IMR-90 (cell line): ENCODE measurements at regions of chr10 and their contacts with region 1.

Region 1: GRCh38 chr10:29081951-29082699 is 206.7 kb upstream of the LYZL1 start:
- DNase-seq: no peak
- ATAC-seq: no peak
- H3K4me3 ChIP-seq: no peak overlapping the region
- H3K27ac ChIP-seq: no peak overlapping the region
- H3K4me1 ChIP-seq: no peaks in the 10 kb centered on the region
- H3K27me3 ChIP-seq: peaks cover 17% of the 10 kb centered on the region
- CTCF ChIP-seq: no peak
- POLR2A ChIP-seq: no peak
- RAD21 ChIP-seq: no peak

Region 2: DNA sequence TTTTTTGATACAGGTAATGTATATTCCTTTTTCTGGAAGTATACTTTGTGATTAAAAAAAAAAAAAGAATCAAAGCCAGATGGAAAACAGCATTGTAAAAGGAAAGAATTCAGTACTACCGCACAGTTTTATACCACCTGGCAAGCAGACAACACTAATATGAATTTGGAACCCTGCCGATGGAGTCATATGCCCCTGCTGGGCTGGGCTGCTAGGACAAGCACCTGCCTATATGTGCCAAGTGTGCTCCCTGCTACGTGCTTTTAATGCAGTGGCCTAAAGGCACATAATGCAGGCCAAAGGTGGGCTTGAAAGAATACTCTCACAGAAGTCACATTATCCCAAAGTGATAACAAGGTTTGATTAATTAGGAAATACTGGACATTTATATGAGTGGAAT is 579.0 kb before region 1 on chr10:
- CTCF ChIA-PET with region 1: no interaction called
- POLR2A ChIA-PET with region 1: interaction called, 14 read pairs
- dilution Hi-C with region 1: no loop called
- in situ Hi-C with region 1: no loop called
- intact Hi-C with region 1: no loop called
- DNase-seq: no peak
- ATAC-seq: no peak
- H3K4me3 ChIP-seq: no peak overlapping the region
- H3K27ac ChIP-seq: no peak overlapping the region
- H3K4me1 ChIP-seq: no peaks in the 10 kb centered on the region
- H3K27me3 ChIP-seq: no peaks in the 10 kb centered on the region; the same call in 1 of the 2 replicates
- CTCF ChIP-seq: no peak
- POLR2A ChIP-seq: no peak
- RAD21 ChIP-seq: no peak